ENCODE measurements at regions of chr10 and their contacts with region 1.

Region 1: GRCh38 chr10:511101-511848 is 178.2 kb downstream of the DIP2C start:
- DNase-seq: no peak
- H3K4me3 ChIP-seq: no peak overlapping the region
- H3K27ac ChIP-seq: peak overlapping the region; percentile 56
- H3K4me1 ChIP-seq: peaks cover 21% of the 10 kb centered on the region
- H3K27me3 ChIP-seq: no peaks in the 10 kb centered on the region
- CTCF ChIP-seq: peak; percentile 91 to 97 (median 91)
- POLR2A ChIP-seq: no peak

Region 2: GRCh38 chr10:78556-78955 is 432.7 kb before region 1 on chr10:
- intact Hi-C with region 1: no loop called
- DNase-seq: no peak
- H3K4me3 ChIP-seq: no peak overlapping the region
- H3K27ac ChIP-seq: no peak overlapping the region
- H3K4me1 ChIP-seq: no peaks in the 10 kb centered on the region
- H3K27me3 ChIP-seq: no peaks in the 10 kb centered on the region
- CTCF ChIP-seq: no peak
- POLR2A ChIP-seq: no peak

Region 3: DNA sequence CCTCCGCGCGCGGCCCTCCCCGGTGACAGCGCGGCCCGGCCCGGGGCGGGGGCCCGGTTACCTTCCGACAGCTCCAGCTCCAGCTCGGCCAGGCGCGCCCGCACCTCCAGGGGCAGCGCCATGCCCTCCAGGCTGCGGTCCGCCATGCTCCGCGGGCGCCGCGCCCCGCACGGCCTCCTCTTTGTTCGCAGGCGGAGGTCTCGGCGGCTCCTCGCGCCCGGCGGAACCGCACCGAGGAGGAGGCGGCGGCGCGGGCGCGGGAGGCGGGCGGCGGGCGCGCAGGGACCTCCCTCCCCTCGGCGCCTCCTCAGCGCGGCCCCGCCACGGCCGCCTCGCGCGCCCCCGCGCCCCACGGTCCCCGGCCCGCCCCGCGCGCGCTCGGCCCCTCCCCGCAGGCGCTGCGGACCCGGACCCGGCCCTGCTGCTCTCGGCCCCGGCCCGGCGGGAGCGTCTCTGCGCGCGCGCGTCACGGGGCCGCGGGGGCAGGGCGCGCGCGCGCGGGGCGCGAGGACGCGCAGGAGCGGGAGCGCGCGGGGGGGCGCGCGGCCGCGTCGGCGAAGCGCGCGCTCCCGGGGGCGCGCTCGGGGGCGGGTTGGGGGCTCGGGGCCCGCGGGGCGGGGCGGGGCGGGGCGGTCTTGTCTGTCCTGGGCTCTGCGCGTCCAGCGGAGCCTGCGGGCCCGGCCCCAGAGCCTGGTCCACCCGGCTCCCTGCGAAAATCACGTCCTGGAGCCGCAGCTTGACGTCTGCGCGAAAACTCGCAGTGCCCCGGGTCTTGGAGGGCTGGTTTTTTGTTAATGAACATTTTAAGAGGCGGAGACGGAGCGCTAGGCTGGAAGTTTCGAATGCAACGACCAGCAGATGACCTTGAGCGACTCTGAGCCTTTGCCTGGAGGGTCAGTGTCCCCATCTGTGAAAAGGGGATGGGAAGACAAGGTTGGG is 178.4 kb after region 1 on chr10 and contains the start of gene DIP2C:
- intact Hi-C with region 1: loop called (anchors 10 kb)
- DNase-seq: no peak
- H3K4me3 ChIP-seq: peak within 1 kb of the TSS; percentile 76 to 91
- H3K27ac ChIP-seq: peak within 1 kb of the TSS; percentile 93
- H3K4me1 ChIP-seq: peaks cover 39% of the 10 kb centered on the region
- H3K27me3 ChIP-seq: no peaks in the 10 kb centered on the region
- CTCF ChIP-seq: no peak
- POLR2A ChIP-seq: peak in 1 of 2 donors; percentile 61
- total RNA-seq, gene DIP2C: 18.4 TPM